ENCODE measurements at regions of chr11 and their contacts with region 1.

Region 1: DNA sequence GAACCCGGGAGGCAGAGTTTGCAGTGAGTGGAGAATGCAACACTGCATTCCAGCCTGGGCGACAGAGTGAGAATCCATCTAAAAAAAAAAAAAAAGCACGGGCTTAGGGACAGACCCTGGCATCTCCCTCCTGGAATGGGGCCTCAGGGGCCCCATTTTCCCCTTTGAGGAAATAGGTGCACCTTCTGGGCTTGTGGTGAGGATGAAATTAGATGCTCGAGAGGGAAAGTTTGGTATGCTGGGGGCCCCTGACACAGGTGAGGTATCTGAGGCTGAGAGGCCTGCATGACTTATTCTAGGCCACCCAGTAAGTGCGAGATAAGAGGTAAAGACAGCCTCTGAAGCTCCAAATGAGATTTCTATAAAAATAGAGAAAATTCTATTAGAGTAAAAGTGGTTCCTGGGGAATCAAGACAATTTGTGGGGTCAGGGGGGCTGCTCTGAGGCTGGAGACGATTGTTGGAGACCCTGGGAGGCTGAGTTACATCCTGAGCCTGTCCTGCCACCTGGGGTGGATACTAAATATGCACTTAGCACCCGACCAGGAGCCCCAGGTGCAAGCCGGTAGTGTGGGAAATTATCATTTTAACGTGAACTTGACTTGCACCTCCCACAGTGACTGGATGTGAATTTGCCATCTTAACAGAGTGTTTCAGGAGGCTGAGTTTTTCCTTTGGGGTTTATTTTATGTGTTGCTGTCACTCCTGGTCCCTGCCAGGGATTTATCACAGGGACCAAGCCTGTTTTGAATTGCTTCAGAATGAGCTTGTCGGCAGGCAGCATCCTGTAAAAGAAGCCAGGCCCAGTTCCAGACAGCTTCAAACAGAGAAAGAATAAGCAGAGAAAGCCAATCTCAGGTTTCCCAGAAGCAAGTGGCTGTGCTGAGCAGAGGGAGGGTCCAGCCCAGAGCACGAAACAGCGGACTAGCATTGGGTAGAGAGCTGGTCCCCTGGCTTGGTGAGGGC is 48.4 kb upstream of the TSKU start:
- DNase-seq: no peak
- ATAC-seq: no peak
- H3K4me3 Mint-ChIP-seq: no peak overlapping the region
- H3K27ac Mint-ChIP-seq: no peak overlapping the region
- H3K4me1 Mint-ChIP-seq: no peaks in the 10 kb centered on the region
- H3K27me3 Mint-ChIP-seq: peaks cover 5% of the 10 kb centered on the region
- CTCF ChIP-seq: no peak

Region 2: GRCh38 chr11:76715858-76716631 is 18.7 kb before region 1 on chr11:
- CTCF ChIA-PET with region 1: no interaction called
- POLR2A ChIA-PET with region 1: no interaction called
- intact Hi-C with region 1: no loop called
- DNase-seq: no peak
- ATAC-seq: no peak
- H3K4me3 Mint-ChIP-seq: no peak overlapping the region
- H3K27ac Mint-ChIP-seq: no peak overlapping the region
- H3K4me1 Mint-ChIP-seq: no peaks in the 10 kb centered on the region
- H3K27me3 Mint-ChIP-seq: peaks cover 5% of the 10 kb centered on the region
- CTCF ChIP-seq: no peak

Region 3: GRCh38 chr11:76799066-76799804 is 64.5 kb after region 1 on chr11:
- CTCF ChIA-PET with region 1: interaction called, 20 read pairs
- POLR2A ChIA-PET with region 1: no interaction called
- intact Hi-C with region 1: loop called (anchors 1 kb)
- DNase-seq: peak; percentile 71
- ATAC-seq: peak; percentile 99
- H3K4me3 Mint-ChIP-seq: peak overlapping the region; percentile 53
- H3K27ac Mint-ChIP-seq: no peak overlapping the region
- H3K4me1 Mint-ChIP-seq: peaks cover 8% of the 10 kb centered on the region
- H3K27me3 Mint-ChIP-seq: peaks cover 13% of the 10 kb centered on the region
- CTCF ChIP-seq: no peak

Region 4: GRCh38 chr11:76838678-76839068 is 103.9 kb after region 1 on chr11:
- CTCF ChIA-PET with region 1: no interaction called
- POLR2A ChIA-PET with region 1: no interaction called
- intact Hi-C with region 1: no loop called
- DNase-seq: no peak
- ATAC-seq: no peak
- H3K4me3 Mint-ChIP-seq: no peak overlapping the region
- H3K27ac Mint-ChIP-seq: no peak overlapping the region
- H3K4me1 Mint-ChIP-seq: no peaks in the 10 kb centered on the region
- H3K27me3 Mint-ChIP-seq: peaks cover 17% of the 10 kb centered on the region
- CTCF ChIP-seq: no peak